Naive thymus-derived CD4-positive, alpha-beta T cell (primary cell): ENCODE measurements at regions of chr2 and their contacts with region 1.

Region 1: GRCh38 chr2:100321181-100321865 is 978 bp downstream of the LONRF2 start:
- DNase-seq: peak in 1 of 9 donors; percentile 35
- ATAC-seq: peak; percentile 8
- H3K4me3 ChIP-seq: no peak overlapping the region
- H3K4me3 Mint-ChIP-seq: peak overlapping the region in 5 of 10 donors; percentile 25 to 79 (median 55)
- H3K27ac ChIP-seq: no peak overlapping the region
- H3K27ac Mint-ChIP-seq: no peak overlapping the region
- H3K4me1 ChIP-seq: no peaks in the 10 kb centered on the region
- H3K4me1 Mint-ChIP-seq: peaks cover 0 to 9% (median 3%) of the 10 kb centered on the region in 7 donors
- H3K27me3 ChIP-seq: peaks cover 10 to 12% of the 10 kb centered on the region in 2 donors
- H3K27me3 Mint-ChIP-seq: peaks cover 58 to 75% (median 66%) of the 10 kb centered on the region in 5 donors

Region 2: DNA sequence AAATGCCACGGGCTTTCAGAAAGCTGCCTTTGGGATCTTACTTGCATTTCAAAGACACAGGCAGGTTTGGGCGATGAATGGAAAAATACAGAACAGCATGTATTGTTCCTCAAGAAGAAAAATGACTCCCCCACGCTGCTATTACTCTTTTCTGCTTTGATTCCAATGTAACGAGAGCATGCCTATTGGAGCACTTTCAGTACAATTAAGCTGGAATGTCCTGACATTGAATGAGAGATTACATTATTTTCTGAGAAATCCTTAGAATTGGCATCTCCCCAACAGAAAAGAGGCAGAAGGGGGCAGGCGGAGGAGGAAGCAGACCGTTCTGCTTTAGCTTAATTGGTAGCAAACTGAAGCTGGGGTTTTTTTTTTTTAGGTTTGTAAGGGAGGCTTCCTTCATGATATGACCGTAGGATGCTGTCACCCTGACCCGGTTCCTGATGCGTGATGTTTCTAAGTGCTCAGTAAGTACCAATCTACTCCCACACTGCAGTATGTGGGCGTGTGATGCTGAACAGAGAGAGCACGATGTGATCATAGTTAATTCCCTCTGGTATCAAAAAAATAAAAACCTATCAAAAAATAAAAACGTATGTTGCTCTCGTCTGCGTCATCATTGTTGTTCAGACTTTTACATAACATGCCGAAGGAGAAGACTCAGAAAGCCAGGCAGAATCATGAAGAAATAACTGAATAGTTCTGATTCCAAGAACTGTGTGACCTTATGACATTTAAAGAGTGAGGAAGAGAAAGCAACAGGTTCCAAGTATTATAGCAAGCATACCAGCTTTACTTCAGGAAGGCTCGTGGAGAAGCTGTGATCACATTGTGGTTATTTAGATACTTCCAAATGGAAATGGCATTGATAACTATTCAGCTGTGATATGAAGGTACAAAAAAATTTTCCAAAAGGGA is 39.5 kb before region 1 on chr2:
- CTCF ChIA-PET with region 1: no interaction called
- POLR2A ChIA-PET with region 1: no interaction called
- intact Hi-C with region 1: loop called in 1 of 2 experiments (anchors 5 kb)
- DNase-seq: no peak
- ATAC-seq: no peak
- H3K4me3 ChIP-seq: no peak overlapping the region
- H3K4me3 Mint-ChIP-seq: peak overlapping the region in 1 of 10 donors; percentile 10
- H3K27ac ChIP-seq: no peak overlapping the region
- H3K27ac Mint-ChIP-seq: peak overlapping the region in 1 of 9 donors; percentile 20
- H3K4me1 ChIP-seq: no peaks in the 10 kb centered on the region
- H3K4me1 Mint-ChIP-seq: peaks cover 0 to 48% (median 0%) of the 10 kb centered on the region in 7 donors
- H3K27me3 ChIP-seq: no peaks in the 10 kb centered on the region
- H3K27me3 Mint-ChIP-seq: peaks cover 11 to 36% (median 25%) of the 10 kb centered on the region in 5 donors